Activated CD8-positive, alpha-beta T cell treated with anti-CD3 and anti-CD28 coated beads, Interleukin-2, amount 10 ng/mL, durations not matched to agents 7 days and 5 days (primary cell): ENCODE measurements at regions of chr14 and their contacts with region 1.

Region 1: GRCh38 chr14:91350813-91351511 is 66.7 kb downstream of the CCDC88C start:
- DNase-seq: peak; percentile 85
- ATAC-seq: peak; percentile 85
- H3K4me3 Mint-ChIP-seq: peak overlapping the region; percentile 78
- H3K27ac Mint-ChIP-seq: peak overlapping the region; percentile 94
- H3K4me1 Mint-ChIP-seq: peaks cover 94% of the 10 kb centered on the region
- H3K27me3 Mint-ChIP-seq: no peaks in the 10 kb centered on the region

Region 2: DNA sequence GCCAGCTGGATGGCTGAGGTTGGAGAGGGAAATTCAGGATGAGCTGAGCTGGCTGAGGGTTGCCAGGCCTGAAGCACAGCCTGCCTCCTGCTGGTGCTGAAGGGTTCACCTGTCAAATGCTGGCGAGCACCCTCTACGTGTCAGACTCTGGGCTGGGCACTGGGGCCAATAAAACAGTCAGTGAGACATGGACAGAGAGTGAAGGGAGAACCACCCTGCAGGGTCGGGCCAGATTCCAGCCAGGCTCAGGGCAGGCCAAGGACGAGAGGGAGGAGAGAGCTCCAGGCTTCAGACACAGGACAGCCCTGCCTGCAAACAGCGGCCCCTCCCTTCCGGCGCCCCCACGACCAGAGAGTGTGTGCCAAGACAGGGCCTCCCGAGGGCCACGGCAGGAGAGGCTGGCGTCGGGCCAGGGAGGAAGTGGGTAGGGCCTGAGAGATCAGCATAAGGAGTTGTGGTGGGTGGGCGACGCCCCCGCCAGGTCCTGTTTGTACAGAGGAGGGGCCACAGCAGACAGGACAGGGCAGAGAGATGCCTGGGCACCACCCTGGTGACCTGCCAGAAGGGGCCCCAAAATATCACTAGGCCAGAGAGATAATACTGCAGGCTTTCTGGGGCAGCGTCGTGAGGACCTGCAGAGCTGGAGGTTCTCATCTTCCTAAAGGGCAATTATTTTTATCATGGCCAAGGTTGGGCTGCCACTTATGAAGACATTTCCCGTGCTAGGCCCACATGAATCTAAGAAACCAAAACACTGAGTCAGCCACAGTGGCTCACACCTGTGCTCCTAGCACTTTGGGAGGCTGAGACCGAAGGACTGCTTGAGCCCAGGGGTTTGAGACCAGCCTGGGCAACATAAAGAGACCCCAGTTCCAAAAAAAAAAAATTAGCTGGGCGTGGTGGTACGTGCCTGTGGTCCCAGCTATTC is 33.3 kb before region 1 on chr14:
- CTCF ChIA-PET with region 1: interaction called, 83 read pairs
- POLR2A ChIA-PET with region 1: interaction called, 4 read pairs
- DNase-seq: peak; percentile 88
- ATAC-seq: peak; percentile 60
- H3K4me3 Mint-ChIP-seq: peak overlapping the region; percentile 52
- H3K27ac Mint-ChIP-seq: peak overlapping the region; percentile 95
- H3K4me1 Mint-ChIP-seq: peaks cover 78% of the 10 kb centered on the region
- H3K27me3 Mint-ChIP-seq: no peaks in the 10 kb centered on the region

Region 3: DNA sequence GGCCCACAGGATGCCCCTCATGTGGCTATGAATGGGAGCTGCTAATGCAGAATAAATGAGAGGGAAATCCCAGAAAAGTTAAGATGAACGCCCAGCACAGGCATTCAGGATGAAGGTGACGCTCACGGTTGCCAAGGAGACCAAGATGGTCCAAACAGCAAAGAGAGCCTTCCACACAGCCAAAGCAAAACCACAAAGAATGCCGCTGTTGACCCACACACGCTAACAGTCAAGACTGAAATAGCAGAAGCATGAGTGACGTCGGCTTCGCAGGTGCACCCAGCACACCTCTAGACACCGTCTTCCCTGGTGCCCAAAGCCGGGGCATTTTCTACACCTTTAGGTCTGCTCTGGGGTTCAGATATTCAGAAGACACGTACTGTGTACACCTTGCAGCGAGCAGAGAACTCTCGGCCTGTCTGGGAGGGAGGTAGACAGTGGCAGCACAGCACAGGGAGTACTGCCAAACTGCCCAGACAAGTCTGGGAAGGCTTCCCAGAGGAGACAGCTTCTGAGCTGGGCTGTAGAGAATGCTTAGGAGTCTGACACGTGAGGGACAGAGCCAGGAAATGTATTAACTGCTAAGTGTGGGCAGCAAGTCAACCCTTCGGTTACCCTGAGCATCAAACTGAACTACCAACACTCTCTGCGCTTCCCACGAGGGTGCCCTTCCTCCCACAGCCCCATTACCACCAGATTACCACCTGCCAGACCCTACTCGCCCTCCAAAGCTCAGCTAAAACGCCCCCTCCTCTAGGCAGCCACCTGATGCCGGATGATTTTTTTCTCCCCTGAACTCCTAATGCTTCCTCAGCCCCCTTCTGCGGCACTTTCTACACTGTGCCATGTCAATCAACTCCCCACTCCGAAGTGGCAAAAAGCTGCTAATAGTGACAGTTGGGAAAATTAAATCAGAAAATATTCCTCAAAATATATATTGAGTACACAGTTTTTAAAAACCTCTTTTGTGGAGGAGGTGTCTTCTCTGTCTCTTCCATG is 16.5 kb after region 1 on chr14:
- CTCF ChIA-PET with region 1: interaction called, 190 read pairs
- POLR2A ChIA-PET with region 1: interaction called, 39 read pairs
- DNase-seq: peak; percentile 72
- ATAC-seq: peak; percentile 83
- H3K4me3 Mint-ChIP-seq: peak overlapping the region; percentile 51
- H3K27ac Mint-ChIP-seq: peak overlapping the region; percentile 82
- H3K4me1 Mint-ChIP-seq: peaks cover 87% of the 10 kb centered on the region
- H3K27me3 Mint-ChIP-seq: no peaks in the 10 kb centered on the region

Region 4: DNA sequence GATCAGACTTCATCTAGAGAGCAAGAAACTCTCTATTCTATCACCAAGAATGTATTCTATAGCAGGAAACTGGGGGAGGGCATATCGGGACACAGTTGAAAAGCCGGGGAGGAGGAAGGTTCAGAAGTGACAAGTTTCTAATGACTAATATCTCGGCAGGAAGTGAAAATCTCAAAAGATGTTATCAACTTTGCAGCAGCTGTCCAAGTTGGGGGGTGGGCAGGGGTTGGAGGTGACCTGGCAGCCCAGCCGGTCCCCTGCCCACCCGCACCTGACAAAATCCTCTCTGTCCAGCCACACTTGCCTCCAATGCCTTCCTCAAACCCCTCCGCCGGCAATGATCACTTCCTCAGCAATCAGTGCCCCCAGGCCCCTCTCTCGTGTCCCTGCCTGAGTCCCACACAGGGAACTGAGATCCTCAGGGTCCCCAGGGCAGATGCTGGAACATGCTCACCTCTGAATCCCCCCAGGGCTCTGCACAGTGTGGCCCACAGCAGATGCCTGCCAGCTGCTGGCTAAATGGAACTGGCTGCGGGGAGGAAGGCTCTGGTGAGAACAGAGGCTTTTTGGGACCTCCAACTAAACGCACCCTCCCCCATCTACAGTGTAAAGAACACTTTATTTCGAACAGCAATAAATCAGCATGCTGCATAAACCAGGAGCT is 22.8 kb after region 1 on chr14:
- CTCF ChIA-PET with region 1: interaction called, 190 read pairs
- POLR2A ChIA-PET with region 1: interaction called, 39 read pairs
- DNase-seq: peak; percentile 76
- ATAC-seq: peak; percentile 46
- H3K4me3 Mint-ChIP-seq: peak overlapping the region; percentile 78
- H3K27ac Mint-ChIP-seq: peak overlapping the region; percentile 91
- H3K4me1 Mint-ChIP-seq: peaks cover 100% of the 10 kb centered on the region
- H3K27me3 Mint-ChIP-seq: no peaks in the 10 kb centered on the region

Region 5: GRCh38 chr14:91396959-91397815 is 46.2 kb after region 1 on chr14:
- CTCF ChIA-PET with region 1: interaction called, 40 read pairs
- POLR2A ChIA-PET with region 1: interaction called, 12 read pairs
- DNase-seq: peak; percentile 82
- ATAC-seq: peak; percentile 76
- H3K4me3 Mint-ChIP-seq: peak overlapping the region; percentile 59
- H3K27ac Mint-ChIP-seq: peak overlapping the region; percentile 87
- H3K4me1 Mint-ChIP-seq: peaks cover 94% of the 10 kb centered on the region
- H3K27me3 Mint-ChIP-seq: no peaks in the 10 kb centered on the region

Region 6: DNA sequence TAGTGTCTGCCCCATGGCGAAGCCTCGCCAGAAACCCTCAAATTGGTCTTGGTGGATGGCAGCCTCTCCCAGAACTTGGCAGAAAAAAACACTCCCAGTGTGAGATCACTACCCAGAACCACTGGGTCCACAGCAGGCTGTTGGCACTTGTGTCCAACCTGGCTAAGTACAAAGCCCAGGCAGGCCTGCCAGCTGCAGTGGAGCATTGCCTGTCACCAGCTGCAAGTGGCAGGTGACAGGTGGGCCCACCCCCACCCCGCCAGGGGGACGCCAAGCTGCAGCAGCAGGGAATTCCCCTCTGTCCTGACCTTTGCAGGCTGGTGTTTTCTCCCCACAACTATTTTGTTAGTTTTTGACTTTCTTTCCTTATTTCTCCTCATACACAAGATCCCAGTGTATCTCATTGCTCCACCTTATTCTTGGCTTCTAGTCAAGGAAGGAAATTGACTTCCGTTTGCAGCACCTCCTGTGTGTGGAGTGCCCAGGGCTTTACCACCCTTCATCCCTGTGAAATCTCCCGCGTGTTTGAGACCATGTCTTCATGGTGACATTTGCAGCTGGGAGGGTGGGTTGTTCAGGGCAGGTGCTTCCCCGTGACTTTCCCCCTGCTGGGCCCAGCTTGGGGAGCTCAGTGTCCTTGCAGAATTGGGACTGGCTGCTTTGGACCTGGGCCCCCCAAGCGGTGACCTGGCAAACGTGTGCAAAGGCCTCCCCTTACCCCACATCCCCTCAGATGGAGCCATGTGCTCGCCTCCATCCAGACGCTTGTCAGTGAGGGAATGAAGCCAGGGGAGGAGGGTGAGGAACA is 1088.8 kb after region 1 on chr14:
- CTCF ChIA-PET with region 1: no interaction called
- POLR2A ChIA-PET with region 1: no interaction called
- DNase-seq: no peak
- ATAC-seq: no peak
- H3K4me3 Mint-ChIP-seq: no peak overlapping the region
- H3K27ac Mint-ChIP-seq: no peak overlapping the region
- H3K4me1 Mint-ChIP-seq: peaks cover 9% of the 10 kb centered on the region
- H3K27me3 Mint-ChIP-seq: peaks cover 11% of the 10 kb centered on the region